AG04449 (cell line): ENCODE measurements at regions of chr16 and their contacts with region 1.

Region 1: DNA sequence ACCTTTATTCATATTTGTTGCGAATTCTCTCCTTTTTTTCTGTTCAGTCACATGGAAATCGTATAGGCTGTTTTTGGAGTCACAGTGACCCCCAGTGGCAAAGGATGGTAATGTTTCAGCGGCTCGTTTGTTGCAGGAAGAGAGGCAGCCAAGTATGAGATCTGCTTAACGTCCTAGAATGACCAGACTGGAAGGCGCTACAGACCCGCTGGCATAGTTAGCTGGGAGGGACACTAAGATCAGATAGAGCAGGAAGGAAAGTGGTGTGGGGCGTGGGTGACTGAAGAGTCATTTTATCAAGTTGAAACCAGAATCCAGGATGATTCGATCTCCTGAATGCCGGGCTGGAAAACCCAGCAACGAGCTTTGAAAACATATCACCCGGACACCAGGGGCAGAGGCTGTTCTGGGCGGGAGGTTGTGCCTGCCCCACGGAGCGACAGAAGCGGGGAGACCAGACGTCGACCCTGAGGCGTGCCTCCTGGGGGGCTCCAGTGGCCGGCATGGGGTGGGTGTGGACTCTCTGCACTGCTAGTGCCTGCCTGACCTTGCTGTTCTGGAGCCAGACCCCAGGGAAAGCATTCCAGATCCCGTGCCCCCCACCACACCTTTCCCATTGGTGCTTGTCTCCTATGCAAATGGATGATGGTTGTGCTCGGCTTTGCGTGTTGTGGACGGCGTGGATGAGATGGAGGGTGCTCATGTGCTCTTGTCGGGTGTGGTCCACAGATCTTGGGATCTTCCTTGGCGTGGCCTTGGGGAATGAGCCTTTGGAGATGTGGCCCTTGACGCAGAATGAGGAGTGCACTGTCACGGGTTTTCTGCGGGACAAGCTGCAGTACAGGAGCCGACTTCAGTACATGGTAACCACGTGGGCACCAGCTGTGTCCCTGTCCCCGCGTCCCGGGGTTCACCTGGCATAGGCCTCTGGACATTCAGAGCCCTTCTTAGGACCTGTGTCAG is 7.7 kb downstream of the IL34 start:
- DNase-seq: no peak
- H3K4me3 ChIP-seq: peak overlapping the region; percentile 43
- CTCF ChIP-seq: peak; percentile 66

Region 2: GRCh38 chr16:70370924-70371323 is 283.2 kb before region 1 on chr16:
- CTCF ChIA-PET with region 1: interaction called, 79 read pairs
- POLR2A ChIA-PET with region 1: no interaction called
- DNase-seq: no peak
- H3K4me3 ChIP-seq: no peak overlapping the region
- CTCF ChIP-seq: no peak

Region 3: GRCh38 chr16:70553645-70554044 is 100.4 kb before region 1 on chr16:
- CTCF ChIA-PET with region 1: interaction called, 15 read pairs
- POLR2A ChIA-PET with region 1: no interaction called
- DNase-seq: peak; percentile 64
- H3K4me3 ChIP-seq: no peak overlapping the region
- CTCF ChIP-seq: no peak

Region 4: DNA sequence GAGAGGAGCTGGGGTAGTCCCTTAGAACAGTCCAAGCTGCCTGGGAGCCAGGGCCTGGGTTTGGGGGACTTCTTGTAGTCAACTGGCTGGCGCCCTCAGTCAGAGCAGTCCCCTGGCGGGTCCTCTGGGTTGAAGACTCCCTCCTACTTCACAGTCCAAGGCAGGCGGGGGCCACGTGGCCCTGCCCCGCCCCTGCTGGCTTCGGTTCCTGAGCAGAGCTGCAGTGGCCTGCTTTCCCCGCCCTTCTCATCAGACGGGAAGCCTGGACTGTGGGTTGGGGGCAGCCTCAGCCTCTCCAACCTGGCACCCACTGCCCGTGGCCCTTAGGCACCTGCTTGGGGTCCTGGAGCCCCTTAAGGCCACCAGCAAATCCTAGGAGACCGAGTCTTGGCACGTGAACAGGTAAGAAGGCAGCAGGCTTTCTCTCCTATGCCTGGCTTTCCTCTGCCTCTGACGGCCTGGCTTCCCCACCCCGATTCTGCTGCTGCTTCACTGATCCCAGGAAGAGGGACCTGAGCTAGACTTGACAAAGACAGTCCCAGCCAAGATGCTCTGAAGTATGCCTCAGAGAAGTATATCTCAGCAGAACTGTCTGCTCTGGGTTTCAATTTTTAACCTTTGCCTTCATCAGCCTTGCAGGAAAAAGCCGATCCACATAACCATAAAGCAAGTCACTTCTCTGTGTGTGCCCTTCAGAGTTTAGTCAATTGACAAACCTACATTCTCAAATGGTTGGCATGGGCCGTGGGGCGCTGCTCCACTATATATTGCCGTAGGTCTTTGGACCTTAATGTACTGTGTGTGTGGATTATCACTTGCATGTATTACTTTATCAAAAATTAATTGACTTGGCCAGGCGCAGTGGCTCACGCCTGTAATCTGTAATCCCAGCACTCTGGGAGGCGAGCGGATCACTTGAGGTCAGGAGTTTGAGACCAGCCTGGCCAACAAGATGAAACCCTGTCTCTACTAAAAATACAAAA is 74.2 kb before region 1 on chr16:
- CTCF ChIA-PET with region 1: interaction called, 51 read pairs
- POLR2A ChIA-PET with region 1: no interaction called
- DNase-seq: no peak
- H3K4me3 ChIP-seq: no peak overlapping the region
- CTCF ChIP-seq: no peak

Region 5: DNA sequence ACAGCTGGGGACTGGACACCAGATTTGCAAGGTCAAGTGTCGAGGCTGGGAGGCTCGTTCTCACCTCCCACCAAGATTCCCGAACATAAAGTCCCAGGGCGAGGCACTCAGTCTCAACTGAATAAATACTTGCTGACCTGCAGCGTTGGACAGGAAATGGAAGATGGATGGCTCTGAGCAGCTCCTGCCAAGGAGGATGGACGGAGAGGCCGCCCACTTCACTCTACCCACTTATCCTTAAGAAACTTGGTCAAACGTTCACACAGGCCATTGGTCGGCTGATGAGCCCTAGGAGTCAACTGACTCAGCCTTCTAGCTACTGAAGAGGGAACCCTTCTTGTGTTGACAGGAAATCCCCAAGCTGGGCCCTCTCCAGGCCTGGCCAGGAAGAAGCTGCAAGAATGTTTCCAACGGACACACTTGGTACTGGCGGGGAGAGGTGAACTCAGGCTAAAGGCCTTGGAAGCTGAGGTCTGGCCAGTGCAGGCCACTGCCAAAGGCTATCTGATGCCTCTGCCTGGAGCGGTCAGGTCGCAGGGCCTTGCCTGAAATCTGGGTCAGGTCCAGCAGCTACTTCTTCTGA is 96.9 kb after region 1 on chr16:
- CTCF ChIA-PET with region 1: interaction called, 10 read pairs
- POLR2A ChIA-PET with region 1: no interaction called
- DNase-seq: peak; percentile 40
- H3K4me3 ChIP-seq: no peak overlapping the region
- CTCF ChIP-seq: no peak